Activated B cell treated with CpG ODN at 0.5 μM for 24 hours (primary cell): ENCODE measurements at regions of chr3 and their contacts with region 1.

Region 1: GRCh38 chr3:188309437-188310269 is 155.7 kb downstream of the LPP start:
- DNase-seq: no peak
- ATAC-seq: peak; percentile 78
- H3K4me3 Mint-ChIP-seq: peak overlapping the region; percentile 72
- H3K27ac Mint-ChIP-seq: peak overlapping the region; percentile 91
- H3K4me1 Mint-ChIP-seq: peaks cover 39% of the 10 kb centered on the region
- H3K27me3 Mint-ChIP-seq: no peaks in the 10 kb centered on the region
- CTCF ChIP-seq: no peak

Region 2: DNA sequence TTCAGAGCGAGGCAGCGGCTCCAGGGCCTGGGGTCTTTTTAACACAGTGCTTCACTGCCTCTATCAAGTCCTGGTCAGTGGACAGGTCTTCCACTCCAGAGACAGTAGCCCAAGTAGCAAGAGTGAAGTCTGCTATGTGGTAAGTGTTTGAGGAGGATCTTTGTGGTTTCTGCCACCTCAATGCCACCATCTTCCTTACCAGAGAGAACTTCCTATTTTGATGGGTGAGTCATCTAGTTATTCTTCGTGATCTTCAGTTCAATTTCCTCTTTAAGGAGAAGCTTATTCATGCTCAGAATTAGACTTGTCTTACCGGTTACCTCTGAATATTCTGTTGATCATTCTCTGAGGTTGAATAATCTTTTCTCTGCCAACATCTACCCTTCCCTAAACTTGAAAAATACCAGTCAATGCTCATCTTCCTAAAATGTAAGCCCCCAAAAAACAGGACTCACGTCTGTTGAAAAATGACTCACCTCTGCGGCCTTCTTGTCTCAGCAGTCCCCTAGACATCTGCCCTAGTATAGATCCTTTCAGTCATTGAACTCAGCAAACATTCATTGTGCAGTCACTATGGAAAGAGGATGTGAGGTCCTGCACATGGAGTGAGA is 532.2 kb before region 1 on chr3:
- CTCF ChIA-PET with region 1: no interaction called
- POLR2A ChIA-PET with region 1: no interaction called
- intact Hi-C with region 1: loop called (anchors 1 kb)
- DNase-seq: peak; percentile 24
- ATAC-seq: peak; percentile 78
- H3K4me3 Mint-ChIP-seq: peak overlapping the region; percentile 58
- H3K27ac Mint-ChIP-seq: peak overlapping the region; percentile 88
- H3K4me1 Mint-ChIP-seq: peaks cover 38% of the 10 kb centered on the region
- H3K27me3 Mint-ChIP-seq: no peaks in the 10 kb centered on the region
- CTCF ChIP-seq: no peak

Region 3: DNA sequence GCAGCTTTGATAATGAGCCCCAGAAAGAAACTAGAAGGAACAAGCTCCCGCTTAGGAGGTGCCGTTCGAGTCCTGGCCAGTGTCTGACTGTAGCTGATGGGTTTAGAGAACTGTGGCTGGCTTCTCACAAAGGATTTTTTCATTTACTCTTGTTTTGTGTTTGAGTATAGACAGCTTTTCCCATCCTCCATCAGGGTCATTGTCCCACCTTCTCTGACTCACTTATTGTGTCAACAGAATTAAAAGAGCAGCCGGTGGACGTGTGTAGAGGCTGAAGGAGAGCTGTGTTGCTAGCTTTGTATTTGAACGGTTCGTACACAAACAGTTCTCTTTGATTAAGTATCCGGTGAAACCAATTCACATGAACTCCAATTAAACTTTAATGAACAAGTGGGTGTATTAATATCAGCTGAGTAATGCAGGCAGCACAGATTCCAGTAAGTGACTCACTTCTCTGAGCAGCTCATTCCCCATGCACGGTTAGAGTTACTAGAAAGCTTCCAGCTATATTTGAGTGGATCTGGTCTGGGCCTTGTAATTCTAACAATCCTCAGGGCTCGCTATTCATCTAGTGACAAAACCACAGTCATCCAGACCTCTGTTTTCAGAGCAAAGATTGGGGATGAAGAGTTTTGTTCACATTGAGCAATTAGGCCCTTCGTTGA is 14.7 kb before region 1 on chr3:
- CTCF ChIA-PET with region 1: interaction called, 3 read pairs
- POLR2A ChIA-PET with region 1: interaction called, 5 read pairs
- intact Hi-C with region 1: loop called (anchors 1 kb)
- DNase-seq: no peak
- ATAC-seq: no peak
- H3K4me3 Mint-ChIP-seq: peak overlapping the region; percentile 17
- H3K27ac Mint-ChIP-seq: peak overlapping the region; percentile 25
- H3K4me1 Mint-ChIP-seq: peaks cover 85% of the 10 kb centered on the region
- H3K27me3 Mint-ChIP-seq: no peaks in the 10 kb centered on the region
- CTCF ChIP-seq: no peak

Region 4: DNA sequence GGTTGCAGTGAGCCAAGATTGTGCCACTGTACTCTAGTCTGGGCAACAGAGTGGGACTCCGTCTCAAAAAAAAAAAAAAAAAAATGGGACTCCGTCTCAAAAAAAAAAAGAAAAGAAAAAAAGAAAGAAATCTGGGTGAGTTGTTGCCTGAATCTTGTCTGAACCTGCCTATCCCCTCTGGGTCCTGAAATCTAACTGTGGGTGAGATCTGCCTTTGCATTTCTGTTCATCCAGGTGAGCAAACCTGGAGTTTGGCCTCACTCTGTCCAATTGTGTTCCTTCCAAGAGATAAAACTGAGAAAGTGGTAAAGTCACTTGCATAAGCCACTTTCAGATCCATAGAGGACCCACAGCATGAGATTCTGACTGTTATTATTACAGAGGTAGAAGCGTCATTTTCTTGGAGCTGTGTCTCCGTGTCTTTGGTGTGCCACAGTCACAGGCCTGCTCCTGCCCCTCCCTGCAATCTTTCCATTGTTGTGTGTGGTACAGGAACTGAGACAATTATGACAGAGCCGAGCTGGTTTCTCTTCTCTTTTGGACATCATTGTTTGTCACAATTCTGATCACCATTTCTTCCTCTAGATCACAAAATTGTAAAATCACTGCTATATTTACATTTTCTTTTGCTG is 80.2 kb after region 1 on chr3:
- CTCF ChIA-PET with region 1: no interaction called
- POLR2A ChIA-PET with region 1: interaction called, 5 read pairs
- intact Hi-C with region 1: loop called (anchors 1 kb)
- DNase-seq: peak; percentile 29
- ATAC-seq: peak; percentile 84
- H3K4me3 Mint-ChIP-seq: peak overlapping the region; percentile 65
- H3K27ac Mint-ChIP-seq: peak overlapping the region; percentile 98
- H3K4me1 Mint-ChIP-seq: peaks cover 87% of the 10 kb centered on the region
- H3K27me3 Mint-ChIP-seq: no peaks in the 10 kb centered on the region
- CTCF ChIP-seq: no peak

Region 5: DNA sequence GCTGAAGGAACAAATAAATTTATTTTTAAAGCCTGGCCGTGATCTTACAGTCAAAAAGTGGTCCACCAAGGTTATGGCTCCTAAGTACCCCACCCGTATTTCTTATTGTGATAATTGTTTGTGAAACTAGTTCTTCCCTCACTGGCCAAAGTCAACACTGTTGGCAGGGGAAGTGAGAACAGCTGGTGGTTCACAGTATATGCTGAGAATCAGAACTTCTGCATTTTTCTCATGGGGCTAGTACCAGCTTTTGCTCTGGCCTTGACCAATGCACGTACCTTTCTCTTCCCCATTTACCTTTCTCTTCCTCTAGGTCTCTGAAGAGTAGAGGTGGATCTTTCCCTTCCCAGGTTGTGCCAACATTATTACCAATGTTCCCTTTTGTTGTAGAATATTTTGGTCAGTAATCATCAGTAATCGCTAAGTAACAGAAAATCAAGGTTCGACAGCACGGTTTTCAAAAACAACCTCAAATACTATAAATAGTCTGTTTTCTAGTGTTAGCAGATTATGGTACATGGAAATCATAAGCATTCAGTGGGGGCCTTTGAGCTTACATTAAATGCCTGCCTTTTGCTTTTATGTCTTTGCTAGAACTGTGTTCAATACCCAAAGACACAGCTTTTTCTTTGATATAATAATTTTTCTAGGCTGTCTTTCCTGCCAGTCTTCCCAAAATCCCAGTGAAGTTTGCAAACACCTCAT is 112.3 kb after region 1 on chr3:
- CTCF ChIA-PET with region 1: no interaction called
- POLR2A ChIA-PET with region 1: interaction called, 11 read pairs
- intact Hi-C with region 1: no loop called
- DNase-seq: no peak
- ATAC-seq: peak; percentile 95
- H3K4me3 Mint-ChIP-seq: peak overlapping the region; percentile 69
- H3K27ac Mint-ChIP-seq: peak overlapping the region; percentile 98
- H3K4me1 Mint-ChIP-seq: peaks cover 90% of the 10 kb centered on the region
- H3K27me3 Mint-ChIP-seq: no peaks in the 10 kb centered on the region
- CTCF ChIP-seq: no peak

Region 6: DNA sequence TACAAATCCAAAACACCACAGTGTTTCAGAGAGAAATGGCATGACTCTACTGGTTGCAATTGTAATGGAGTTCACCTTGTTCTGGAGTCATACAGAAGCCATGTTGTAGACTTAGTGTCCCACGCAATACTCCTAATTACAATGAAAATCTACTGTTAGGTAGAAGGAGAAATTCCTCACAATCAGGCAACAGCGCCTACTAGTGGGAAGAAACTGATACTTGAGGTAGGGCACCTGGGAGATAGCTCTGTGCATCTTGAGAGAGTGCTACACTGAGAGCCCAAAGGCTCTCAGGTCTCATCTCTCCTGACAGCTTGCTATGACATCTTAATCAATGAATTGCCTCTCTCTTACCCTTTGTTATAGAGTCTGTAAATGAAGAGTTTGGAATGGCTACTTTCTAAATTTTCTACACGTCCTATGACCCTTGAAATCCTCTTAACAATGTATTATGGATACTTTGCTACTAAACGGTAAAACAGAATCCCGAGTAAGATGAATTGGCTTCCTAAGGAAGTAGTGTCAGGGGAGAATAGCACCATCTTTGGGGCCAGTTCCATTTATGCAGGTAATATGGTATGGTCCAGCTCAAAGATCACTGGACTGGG is 439.5 kb after region 1 on chr3:
- CTCF ChIA-PET with region 1: no interaction called
- POLR2A ChIA-PET with region 1: no interaction called
- intact Hi-C with region 1: loop called (anchors 2 kb)
- DNase-seq: no peak
- ATAC-seq: no peak
- H3K4me3 Mint-ChIP-seq: no peak overlapping the region
- H3K27ac Mint-ChIP-seq: peak overlapping the region; percentile 55
- H3K4me1 Mint-ChIP-seq: peaks cover 43% of the 10 kb centered on the region
- H3K27me3 Mint-ChIP-seq: no peaks in the 10 kb centered on the region
- CTCF ChIP-seq: no peak